CD8-positive, alpha-beta T cell (primary cell): ENCODE measurements at regions of chr6 and their contacts with region 1.

Region 1: DNA sequence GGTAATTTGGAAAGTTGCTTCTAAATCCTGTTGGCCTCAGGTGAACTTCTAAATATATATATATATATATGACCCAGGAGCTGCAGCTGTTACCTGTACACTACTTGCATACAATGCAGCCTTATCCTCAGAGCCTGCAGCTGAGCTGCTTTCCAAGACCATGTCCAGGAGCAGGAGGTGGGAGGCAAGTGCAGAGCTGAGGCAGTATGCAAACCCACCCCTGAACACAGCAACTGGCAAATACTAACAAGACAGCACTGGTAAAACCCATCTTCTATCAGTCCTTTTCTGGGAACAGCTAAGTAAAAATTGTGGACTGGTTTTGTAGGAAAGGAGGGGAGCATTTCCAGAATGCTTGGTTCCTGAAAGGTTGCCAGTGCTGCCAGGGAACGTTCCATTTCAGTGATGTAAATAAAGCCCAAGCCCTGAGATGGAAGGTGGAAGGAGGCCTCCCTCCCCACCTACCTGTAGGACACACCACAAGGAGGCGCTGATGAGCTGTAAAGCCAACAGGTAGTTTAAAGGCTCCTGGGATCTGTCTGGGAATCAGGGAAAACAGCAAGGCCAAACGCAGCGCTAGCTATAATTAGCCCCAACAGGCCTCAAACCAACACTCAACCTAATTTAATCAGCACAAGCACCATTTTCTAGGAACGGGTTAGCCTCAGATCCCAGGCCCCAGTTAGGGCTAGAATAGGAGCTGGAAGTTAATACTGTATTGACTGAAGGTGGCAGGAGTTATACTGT is 93.8 kb upstream of the MAP7 start:
- DNase-seq: peak; percentile 52 to 86 (median 80)
- ATAC-seq: peak; percentile 54
- H3K4me3 ChIP-seq: no peak overlapping the region
- H3K4me3 Mint-ChIP-seq: no peak overlapping the region
- H3K27ac ChIP-seq: peak overlapping the region in 1 of 2 experiments; percentile 6
- H3K27ac Mint-ChIP-seq: peak overlapping the region; percentile 45
- H3K4me1 ChIP-seq: peaks cover 10% of the 10 kb centered on the region
- H3K4me1 Mint-ChIP-seq: peaks cover 3% of the 10 kb centered on the region
- H3K27me3 ChIP-seq: no peaks in the 10 kb centered on the region
- H3K27me3 Mint-ChIP-seq: no peaks in the 10 kb centered on the region
- CTCF ChIP-seq: peak; percentile 96

Region 2: DNA sequence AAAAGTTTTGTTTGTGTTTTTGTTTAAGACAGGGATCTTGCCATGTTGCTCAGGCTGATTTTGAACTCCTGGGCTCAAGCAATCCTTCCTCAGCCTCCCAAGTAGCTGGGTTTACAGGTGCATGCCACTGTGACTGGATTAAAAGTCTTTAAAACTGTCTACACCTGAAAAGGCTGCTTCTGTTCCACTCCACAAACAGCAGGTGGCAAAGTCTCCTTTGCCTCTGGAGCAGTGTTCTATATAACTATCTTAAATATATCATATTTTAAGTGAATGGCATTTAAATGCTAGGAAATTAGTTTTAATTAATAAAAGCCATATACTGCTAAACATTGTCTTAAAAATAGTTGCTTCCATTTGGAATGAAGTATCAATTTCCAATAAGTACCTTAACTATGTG is 265.1 kb before region 1 on chr6:
- CTCF ChIA-PET with region 1: no interaction called
- POLR2A ChIA-PET with region 1: no interaction called
- intact Hi-C with region 1: no loop called
- DNase-seq: no peak
- ATAC-seq: no peak
- H3K4me3 ChIP-seq: no peak overlapping the region
- H3K4me3 Mint-ChIP-seq: no peak overlapping the region
- H3K27ac ChIP-seq: no peak overlapping the region
- H3K27ac Mint-ChIP-seq: no peak overlapping the region
- H3K4me1 ChIP-seq: no peaks in the 10 kb centered on the region
- H3K4me1 Mint-ChIP-seq: no peaks in the 10 kb centered on the region
- H3K27me3 ChIP-seq: no peaks in the 10 kb centered on the region
- H3K27me3 Mint-ChIP-seq: peaks cover 3% of the 10 kb centered on the region
- CTCF ChIP-seq: no peak

Region 3: GRCh38 chr6:136446579-136447182 is 197.3 kb before region 1 on chr6:
- CTCF ChIA-PET with region 1: no interaction called
- POLR2A ChIA-PET with region 1: no interaction called
- intact Hi-C with region 1: no loop called
- DNase-seq: no peak
- ATAC-seq: no peak
- H3K4me3 ChIP-seq: no peak overlapping the region
- H3K4me3 Mint-ChIP-seq: no peak overlapping the region
- H3K27ac ChIP-seq: no peak overlapping the region
- H3K27ac Mint-ChIP-seq: no peak overlapping the region
- H3K4me1 ChIP-seq: no peaks in the 10 kb centered on the region
- H3K4me1 Mint-ChIP-seq: no peaks in the 10 kb centered on the region
- H3K27me3 ChIP-seq: peaks cover 0 to 3% of the 10 kb centered on the region in 2 experiments
- H3K27me3 Mint-ChIP-seq: peaks cover 6% of the 10 kb centered on the region
- CTCF ChIP-seq: no peak

Region 4: DNA sequence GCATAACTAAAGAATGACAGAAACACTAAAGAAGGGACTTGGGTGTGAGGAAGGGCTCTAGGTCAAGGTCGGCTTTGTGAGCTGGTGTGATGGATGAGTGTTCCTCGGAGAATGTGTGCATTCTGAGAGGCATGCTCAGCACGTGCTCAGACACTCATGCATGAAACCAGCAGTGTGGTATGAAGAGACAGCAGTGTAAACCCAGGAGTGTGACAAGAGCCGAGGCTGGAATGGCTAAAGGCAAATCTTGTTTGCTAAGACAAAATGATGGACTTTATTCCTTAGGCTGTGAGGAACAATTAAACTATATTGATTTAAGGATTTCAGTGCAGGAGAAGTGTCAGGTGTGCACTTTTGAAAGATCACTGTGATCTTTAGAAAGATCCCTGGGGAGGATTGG is 13.6 kb after region 1 on chr6:
- CTCF ChIA-PET with region 1: interaction called, 42 read pairs
- POLR2A ChIA-PET with region 1: interaction called, 3 read pairs
- intact Hi-C with region 1: no loop called
- DNase-seq: no peak
- ATAC-seq: no peak
- H3K4me3 ChIP-seq: no peak overlapping the region
- H3K4me3 Mint-ChIP-seq: no peak overlapping the region
- H3K27ac ChIP-seq: no peak overlapping the region
- H3K27ac Mint-ChIP-seq: peak overlapping the region; percentile 0
- H3K4me1 ChIP-seq: no peaks in the 10 kb centered on the region
- H3K4me1 Mint-ChIP-seq: no peaks in the 10 kb centered on the region
- H3K27me3 ChIP-seq: no peaks in the 10 kb centered on the region
- H3K27me3 Mint-ChIP-seq: no peaks in the 10 kb centered on the region
- CTCF ChIP-seq: no peak

Region 5: DNA sequence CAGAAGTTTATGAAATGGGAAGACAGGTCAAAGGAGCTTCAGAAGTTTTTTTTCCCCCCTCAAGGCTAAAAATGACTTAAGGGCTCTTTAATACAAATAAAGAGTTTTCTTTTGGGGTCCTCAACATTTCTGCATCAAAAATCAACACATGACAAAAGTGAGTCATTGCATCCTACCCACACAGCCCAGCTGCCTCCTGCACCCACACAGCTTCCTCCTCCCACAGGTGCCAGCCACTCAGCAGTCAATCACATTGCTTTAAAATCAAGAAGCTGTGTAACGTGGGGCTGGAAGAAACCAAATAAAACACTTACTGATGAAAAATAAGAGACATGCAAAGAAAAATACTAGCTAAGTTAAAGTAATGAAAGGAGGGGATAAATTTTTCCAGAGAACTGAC is 79.8 kb after region 1 on chr6:
- CTCF ChIA-PET with region 1: interaction called, 3 read pairs
- POLR2A ChIA-PET with region 1: no interaction called
- intact Hi-C with region 1: loop called in 1 of 2 experiments (anchors 5 kb)
- DNase-seq: peak in 8 of 9 experiments; percentile 16 to 63 (median 48)
- ATAC-seq: peak; percentile 99
- H3K4me3 ChIP-seq: no peak overlapping the region
- H3K4me3 Mint-ChIP-seq: peak overlapping the region; percentile 19
- H3K27ac ChIP-seq: no peak overlapping the region
- H3K27ac Mint-ChIP-seq: peak overlapping the region; percentile 23
- H3K4me1 ChIP-seq: peaks cover 7% of the 10 kb centered on the region
- H3K4me1 Mint-ChIP-seq: peaks cover 32% of the 10 kb centered on the region
- H3K27me3 ChIP-seq: no peaks in the 10 kb centered on the region
- H3K27me3 Mint-ChIP-seq: no peaks in the 10 kb centered on the region
- CTCF ChIP-seq: no peak

Region 6: DNA sequence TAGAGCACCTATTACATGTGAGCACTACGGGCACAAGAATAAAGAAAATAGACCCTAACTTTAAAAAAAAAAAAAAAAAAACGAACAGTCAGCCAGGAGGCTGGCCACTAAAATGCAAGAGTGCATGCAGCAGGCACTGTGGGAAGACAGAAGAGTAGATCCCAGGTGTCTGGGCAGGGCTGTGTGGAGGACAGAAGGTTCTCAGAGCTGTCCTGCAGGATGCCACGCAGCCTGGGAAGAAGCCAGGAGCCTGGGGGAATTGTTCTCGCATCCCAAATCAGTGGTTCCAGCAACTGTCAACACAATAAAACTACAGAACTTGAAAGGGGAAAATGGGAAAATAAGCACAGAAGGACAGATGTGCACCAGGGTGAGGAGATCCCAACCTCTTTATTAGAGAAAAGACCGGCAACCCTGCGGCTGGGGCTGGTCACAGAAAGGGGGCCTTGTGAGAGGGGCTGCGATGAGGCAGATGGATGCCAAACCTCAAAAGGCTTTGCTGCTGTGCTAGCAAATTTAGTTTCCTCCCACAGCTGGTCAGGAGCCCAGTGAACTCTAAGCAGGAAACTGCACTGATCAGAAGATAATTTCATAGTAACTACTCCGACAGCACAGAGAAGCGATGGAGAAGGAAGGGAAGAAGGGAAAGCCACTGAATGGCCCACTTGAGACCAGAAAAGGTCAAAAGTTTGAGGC is 117.4 kb after region 1 on chr6:
- CTCF ChIA-PET with region 1: interaction called, 17 read pairs
- POLR2A ChIA-PET with region 1: no interaction called
- intact Hi-C with region 1: no loop called
- DNase-seq: peak in 6 of 9 experiments; percentile 10 to 60 (median 39)
- ATAC-seq: peak; percentile 51
- H3K4me3 ChIP-seq: peak overlapping the region in 1 of 2 experiments; percentile 27
- H3K4me3 Mint-ChIP-seq: peak overlapping the region; percentile 78
- H3K27ac ChIP-seq: peak overlapping the region in 1 of 2 experiments; percentile 69
- H3K27ac Mint-ChIP-seq: peak overlapping the region; percentile 93
- H3K4me1 ChIP-seq: peaks cover 46% of the 10 kb centered on the region
- H3K4me1 Mint-ChIP-seq: peaks cover 66% of the 10 kb centered on the region
- H3K27me3 ChIP-seq: no peaks in the 10 kb centered on the region
- H3K27me3 Mint-ChIP-seq: no peaks in the 10 kb centered on the region
- CTCF ChIP-seq: no peak

Region 7: DNA sequence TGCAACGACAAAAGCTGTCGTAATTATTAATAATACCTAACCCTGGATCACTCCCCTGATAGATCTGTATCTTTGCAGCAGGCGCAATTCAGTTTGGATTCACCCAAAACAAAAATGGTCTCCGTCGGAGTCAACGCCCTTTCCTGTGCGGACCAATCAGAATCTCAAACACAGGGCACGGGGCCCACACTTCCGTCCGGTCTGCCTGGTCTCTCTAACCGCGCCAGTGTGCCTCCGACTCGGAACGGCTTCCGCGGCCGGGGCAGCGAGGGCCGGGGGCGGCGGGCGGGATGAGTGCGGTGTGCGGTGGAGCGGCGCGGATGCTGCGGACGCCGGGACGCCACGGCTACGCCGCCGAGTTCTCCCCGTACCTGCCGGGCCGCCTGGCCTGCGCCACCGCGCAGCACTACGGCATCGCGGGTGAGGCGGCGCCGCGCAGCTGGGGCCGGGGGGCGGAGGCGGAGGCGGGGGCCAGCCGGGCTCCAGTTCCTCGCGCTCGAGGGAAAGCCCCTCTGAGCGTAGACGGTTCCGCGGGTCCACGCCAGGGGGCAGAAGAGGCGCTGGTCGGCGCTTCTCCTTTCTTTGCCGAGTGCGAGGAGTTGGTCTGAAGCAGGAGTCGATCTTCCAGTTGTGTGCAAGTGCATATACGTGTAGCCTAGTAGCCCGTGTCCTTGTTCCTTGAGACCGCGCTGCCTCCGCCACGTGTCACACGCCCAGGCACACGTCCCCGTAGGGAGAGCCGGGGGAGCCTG is 178.5 kb after region 1 on chr6 and contains the start of gene PEX7:
- CTCF ChIA-PET with region 1: interaction called, 8 read pairs
- POLR2A ChIA-PET with region 1: interaction called, 4 read pairs
- intact Hi-C with region 1: loop called (anchors 1 to 10 kb)
- DNase-seq: peak; percentile 76 to 94 (median 84)
- ATAC-seq: peak; percentile 91
- H3K4me3 ChIP-seq: peak within 1 kb of the TSS; percentile 57 to 77
- H3K4me3 Mint-ChIP-seq: peak within 1 kb of the TSS; percentile 93
- H3K27ac ChIP-seq: peak within 1 kb of the TSS; percentile 70 to 82
- H3K27ac Mint-ChIP-seq: peak within 1 kb of the TSS; percentile 95
- H3K4me1 ChIP-seq: peaks cover 14% of the 10 kb centered on the region
- H3K4me1 Mint-ChIP-seq: peaks cover 30% of the 10 kb centered on the region
- H3K27me3 ChIP-seq: no peaks in the 10 kb centered on the region
- H3K27me3 Mint-ChIP-seq: peaks cover 3% of the 10 kb centered on the region
- CTCF ChIP-seq: peak; percentile 68
- total RNA-seq, gene PEX7: 2.6 to 2.8 TPM

Region 8: GRCh38 chr6:136962661-136963060 is 318.6 kb after region 1 on chr6:
- CTCF ChIA-PET with region 1: no interaction called
- POLR2A ChIA-PET with region 1: no interaction called
- intact Hi-C with region 1: no loop called
- DNase-seq: no peak
- ATAC-seq: no peak
- H3K4me3 ChIP-seq: no peak overlapping the region
- H3K4me3 Mint-ChIP-seq: no peak overlapping the region
- H3K27ac ChIP-seq: no peak overlapping the region
- H3K27ac Mint-ChIP-seq: no peak overlapping the region
- H3K4me1 ChIP-seq: no peaks in the 10 kb centered on the region
- H3K4me1 Mint-ChIP-seq: no peaks in the 10 kb centered on the region
- H3K27me3 ChIP-seq: no peaks in the 10 kb centered on the region
- H3K27me3 Mint-ChIP-seq: peaks cover 23% of the 10 kb centered on the region
- CTCF ChIP-seq: no peak

Region 9: DNA sequence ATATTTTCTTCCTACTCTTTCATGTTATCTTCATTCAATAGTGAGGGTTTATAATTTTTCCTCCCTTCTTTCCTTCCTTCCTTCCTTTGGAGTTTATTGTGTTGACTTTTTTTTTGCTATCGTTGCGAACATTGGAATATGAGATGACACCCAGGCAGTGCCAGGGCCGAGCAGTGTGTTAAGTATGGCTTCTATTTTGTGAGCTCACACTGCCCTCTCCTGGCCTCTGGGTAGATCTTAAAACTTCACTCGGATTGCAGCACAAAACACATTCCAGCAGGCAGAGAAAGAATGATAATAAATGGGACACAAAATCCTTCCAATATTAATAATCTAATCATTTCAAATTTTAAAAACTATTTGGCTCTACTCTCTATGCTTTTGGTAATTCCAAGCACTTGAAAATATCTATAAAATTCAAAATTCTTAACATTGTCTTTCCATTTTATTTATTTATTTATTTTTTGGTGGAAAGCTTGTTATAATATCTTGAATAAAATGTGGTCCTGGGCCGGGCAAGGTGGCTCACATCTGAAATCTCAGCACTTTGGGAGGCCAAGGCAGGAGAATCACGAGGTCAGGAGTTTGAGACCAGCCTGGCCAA is 997.6 kb after region 1 on chr6:
- CTCF ChIA-PET with region 1: interaction called, 3 read pairs
- POLR2A ChIA-PET with region 1: no interaction called
- intact Hi-C with region 1: loop called in 1 of 2 experiments (anchors 10 kb)
- DNase-seq: peak; percentile 41 to 83 (median 64)
- ATAC-seq: peak; percentile 74
- H3K4me3 ChIP-seq: no peak overlapping the region
- H3K4me3 Mint-ChIP-seq: no peak overlapping the region
- H3K27ac ChIP-seq: no peak overlapping the region
- H3K27ac Mint-ChIP-seq: no peak overlapping the region
- H3K4me1 ChIP-seq: no peaks in the 10 kb centered on the region
- H3K4me1 Mint-ChIP-seq: peaks cover 13% of the 10 kb centered on the region
- H3K27me3 ChIP-seq: no peaks in the 10 kb centered on the region
- H3K27me3 Mint-ChIP-seq: peaks cover 2% of the 10 kb centered on the region
- CTCF ChIP-seq: peak; percentile 77

Region 10: GRCh38 chr6:137776786-137777686 is 1133.0 kb after region 1 on chr6:
- CTCF ChIA-PET with region 1: no interaction called
- POLR2A ChIA-PET with region 1: no interaction called
- intact Hi-C with region 1: no loop called
- DNase-seq: no peak
- ATAC-seq: no peak
- H3K4me3 ChIP-seq: no peak overlapping the region
- H3K4me3 Mint-ChIP-seq: no peak overlapping the region
- H3K27ac ChIP-seq: no peak overlapping the region
- H3K27ac Mint-ChIP-seq: no peak overlapping the region
- H3K4me1 ChIP-seq: no peaks in the 10 kb centered on the region
- H3K4me1 Mint-ChIP-seq: no peaks in the 10 kb centered on the region
- H3K27me3 ChIP-seq: no peaks in the 10 kb centered on the region
- H3K27me3 Mint-ChIP-seq: no peaks in the 10 kb centered on the region
- CTCF ChIP-seq: no peak